ENCODE measurements at regions of chr16 and their contacts with region 1.

Region 1: GRCh38 chr16:14249291-14250032 is 178.3 kb downstream of the MRTFB start:
- DNase-seq: peak; percentile 51
- CTCF ChIP-seq: peak; percentile 79

Region 2: DNA sequence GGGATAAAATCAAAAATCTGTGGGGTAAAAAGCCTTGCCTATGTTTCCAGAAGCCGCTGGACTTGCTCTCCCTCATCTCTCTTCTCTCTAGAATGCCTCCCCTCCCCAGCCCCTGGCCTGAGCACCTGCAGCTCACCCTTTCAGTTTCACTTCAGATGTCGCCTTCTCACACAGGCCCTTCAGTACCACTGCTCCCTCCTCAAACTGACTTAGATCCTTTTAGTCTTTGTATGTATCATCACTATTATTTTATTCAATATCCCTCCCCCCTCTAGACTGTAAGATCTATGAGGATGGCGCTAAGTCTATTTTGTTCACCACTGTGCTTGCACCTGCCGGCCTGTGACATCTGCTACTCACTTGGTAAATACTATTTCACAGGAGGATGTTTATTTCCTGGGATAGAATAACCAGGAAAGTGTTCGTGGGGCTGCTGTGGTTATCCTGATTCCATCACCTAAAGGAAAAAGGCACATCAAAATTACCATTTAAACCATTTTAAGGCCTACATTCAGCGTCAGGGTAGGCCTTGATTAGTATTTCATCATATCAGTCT is 56.1 kb before region 1 on chr16:
- CTCF ChIA-PET with region 1: no interaction called
- POLR2A ChIA-PET with region 1: no interaction called
- DNase-seq: peak; percentile 63
- CTCF ChIP-seq: no peak

Region 3: GRCh38 chr16:14263011-14263410 is 13.5 kb after region 1 on chr16:
- CTCF ChIA-PET with region 1: interaction called, 21 read pairs
- POLR2A ChIA-PET with region 1: no interaction called
- DNase-seq: no peak
- CTCF ChIP-seq: no peak